H1 (cell line): ENCODE measurements at regions of chr2 and their contacts with region 1.

Region 1: GRCh38 chr2:109222825-109223471 is 93.9 kb downstream of the SH3RF3 start:
- DNase-seq: no peak
- H3K4me3 ChIP-seq: no peak overlapping the region
- H3K27ac ChIP-seq: no peak overlapping the region
- H3K4me1 ChIP-seq: no peaks in the 10 kb centered on the region; a peak in 1 of 7 replicates
- H3K27me3 ChIP-seq: no peaks in the 10 kb centered on the region
- CTCF ChIP-seq: peak; percentile 42 to 73 (median 66)
- EP300 ChIP-seq: no peak
- POLR2A ChIP-seq: no peak
- RAD21 ChIP-seq: peak; percentile 60 to 66

Region 2: GRCh38 chr2:109238580-109238979 is 15.6 kb after region 1 on chr2:
- CTCF ChIA-PET with region 1: interaction called, 13 read pairs
- POLR2A ChIA-PET with region 1: no interaction called
- DNase-seq: no peak
- H3K4me3 ChIP-seq: no peak overlapping the region
- H3K27ac ChIP-seq: no peak overlapping the region
- H3K4me1 ChIP-seq: no peaks in the 10 kb centered on the region; a peak in 1 of 7 replicates
- H3K27me3 ChIP-seq: no peaks in the 10 kb centered on the region
- CTCF ChIP-seq: no peak
- EP300 ChIP-seq: no peak
- POLR2A ChIP-seq: no peak
- RAD21 ChIP-seq: no peak

Region 3: DNA sequence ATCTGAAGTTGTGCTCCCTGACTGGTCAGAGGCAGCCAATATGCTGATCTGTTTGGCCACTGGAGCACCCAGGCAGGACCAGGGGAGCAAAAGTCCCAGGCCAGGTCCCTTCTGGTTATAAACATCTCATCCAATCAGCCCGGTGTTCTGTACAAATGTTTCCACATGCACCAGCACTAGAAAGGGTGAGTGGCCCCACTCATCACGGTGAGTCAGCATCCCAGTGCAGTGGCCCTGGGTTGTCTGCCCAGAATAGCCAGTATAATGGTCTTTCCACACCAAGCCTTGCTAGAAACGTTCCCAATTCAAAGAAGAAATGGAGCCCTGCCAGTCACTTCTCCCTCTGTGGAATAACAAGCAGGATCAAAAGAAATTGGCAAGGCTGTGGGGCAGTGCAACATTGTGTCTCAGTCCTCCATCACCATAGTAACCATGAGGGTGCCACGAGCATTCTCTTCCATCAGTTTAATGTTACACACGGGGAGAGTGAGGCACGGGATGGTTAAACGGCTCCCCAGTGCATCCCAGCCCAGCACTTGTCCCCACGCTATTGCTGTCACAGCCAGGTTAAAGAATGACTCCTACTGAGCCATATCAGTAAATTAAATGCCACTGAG is 215.9 kb after region 1 on chr2:
- CTCF ChIA-PET with region 1: no interaction called
- POLR2A ChIA-PET with region 1: no interaction called
- DNase-seq: no peak
- H3K4me3 ChIP-seq: no peak overlapping the region
- H3K27ac ChIP-seq: no peak overlapping the region
- H3K4me1 ChIP-seq: no peaks in the 10 kb centered on the region
- H3K27me3 ChIP-seq: no peaks in the 10 kb centered on the region
- CTCF ChIP-seq: no peak
- EP300 ChIP-seq: no peak
- POLR2A ChIP-seq: no peak
- RAD21 ChIP-seq: no peak